Kidney (tissue), 22 donors: ENCODE measurements at regions of chr1 and their contacts with region 1.

Region 1: GRCh38 chr1:159891275-159892157 is 8.4 kb downstream of the CFAP45 start:
- DNase-seq: peak; percentile 86 to 91 (median 87)
- H3K4me3 ChIP-seq: no peak overlapping the region
- H3K27ac ChIP-seq: no peak overlapping the region
- H3K4me1 ChIP-seq: peaks cover 0 to 9% (median 0%) of the 10 kb centered on the region in 3 donors
- H3K27me3 ChIP-seq: no peaks in the 10 kb centered on the region
- CTCF ChIP-seq: peak; percentile 100

Region 2: DNA sequence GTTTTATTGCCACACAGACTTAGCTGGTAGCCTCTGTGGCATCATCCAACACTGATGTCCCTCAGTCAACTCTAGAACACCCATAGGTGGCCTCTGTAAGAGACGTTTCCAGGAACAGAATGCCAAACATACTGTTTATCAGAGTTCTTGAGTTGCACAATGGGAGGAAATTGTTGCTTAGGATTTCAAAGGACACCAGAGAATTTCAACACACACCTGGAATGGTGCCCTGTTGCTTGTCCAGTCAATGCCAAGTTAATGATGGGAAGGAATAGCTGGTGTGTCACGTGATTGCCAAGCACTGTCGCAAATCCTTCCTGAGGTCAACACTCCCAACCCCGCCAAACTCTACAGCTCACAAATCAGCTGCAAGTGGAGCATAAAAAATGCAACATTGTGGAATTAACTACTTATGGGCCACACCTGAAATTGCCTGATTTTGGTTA is 139.4 kb before region 1 on chr1:
- intact Hi-C with region 1: no loop called
- DNase-seq: peak in 2 of 5 donors; percentile 31 to 82
- H3K4me3 ChIP-seq: no peak overlapping the region
- H3K27ac ChIP-seq: peak overlapping the region; percentile 51 to 88
- H3K4me1 ChIP-seq: peaks cover 0 to 9% (median 7%) of the 10 kb centered on the region in 3 donors
- H3K27me3 ChIP-seq: no peaks in the 10 kb centered on the region
- CTCF ChIP-seq: no peak

Region 3: GRCh38 chr1:159798893-159799292 is 92.6 kb before region 1 on chr1:
- intact Hi-C with region 1: loop called (anchors 5 kb)
- DNase-seq: peak in 4 of 5 donors; percentile 68 to 88 (median 76)
- H3K4me3 ChIP-seq: no peak overlapping the region
- H3K27ac ChIP-seq: no peak overlapping the region
- H3K4me1 ChIP-seq: peaks cover 0 to 2% (median 0%) of the 10 kb centered on the region in 3 donors
- H3K27me3 ChIP-seq: no peaks in the 10 kb centered on the region
- CTCF ChIP-seq: peak; percentile 80